Dorsolateral prefrontal cortex (tissue), 120 donors: ENCODE measurements at regions of chr9 and their contacts with region 1.

Region 1: DNA sequence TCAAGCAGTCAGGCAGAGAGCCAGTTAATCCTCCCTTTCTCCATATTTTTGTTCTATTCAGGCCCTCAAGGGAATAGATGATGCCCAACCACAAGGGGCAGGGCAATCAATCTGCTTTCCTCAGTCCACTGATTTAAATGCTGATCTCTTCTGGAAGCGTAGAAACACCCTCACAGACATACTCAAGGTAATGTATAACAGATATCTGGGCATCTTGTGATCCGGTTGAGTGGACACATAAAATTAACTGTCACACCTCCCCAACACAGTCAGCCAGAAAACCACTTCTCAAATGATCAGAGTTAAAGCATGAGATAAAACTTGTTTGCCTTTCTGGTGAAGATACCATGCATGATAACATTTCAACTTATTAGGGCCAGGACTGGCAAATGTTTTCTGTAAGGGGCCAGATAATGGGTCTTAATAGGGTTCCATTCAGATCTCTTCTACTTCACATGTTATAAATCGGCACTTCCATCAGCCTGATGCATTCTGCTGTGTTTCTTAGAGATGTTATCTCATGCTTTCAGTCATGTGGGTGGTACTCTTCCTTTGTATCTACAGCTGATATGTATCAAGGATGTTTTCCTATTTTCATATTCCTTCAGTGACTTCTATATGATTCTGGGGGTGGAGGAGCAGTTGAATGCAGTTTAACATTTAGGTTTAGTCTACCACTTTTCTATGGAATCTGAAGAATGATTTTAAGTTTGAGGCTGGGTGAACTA is 58.9 kb upstream of the CNTLN start:
- DNase-seq: no peak
- H3K4me3 ChIP-seq: no peak overlapping the region
- H3K27ac ChIP-seq: no peak overlapping the region
- H3K27me3 ChIP-seq: peaks cover 0 to 2% (median 0%) of the 10 kb centered on the region in 45 donors
- CTCF ChIP-seq: no peak

Region 2: DNA sequence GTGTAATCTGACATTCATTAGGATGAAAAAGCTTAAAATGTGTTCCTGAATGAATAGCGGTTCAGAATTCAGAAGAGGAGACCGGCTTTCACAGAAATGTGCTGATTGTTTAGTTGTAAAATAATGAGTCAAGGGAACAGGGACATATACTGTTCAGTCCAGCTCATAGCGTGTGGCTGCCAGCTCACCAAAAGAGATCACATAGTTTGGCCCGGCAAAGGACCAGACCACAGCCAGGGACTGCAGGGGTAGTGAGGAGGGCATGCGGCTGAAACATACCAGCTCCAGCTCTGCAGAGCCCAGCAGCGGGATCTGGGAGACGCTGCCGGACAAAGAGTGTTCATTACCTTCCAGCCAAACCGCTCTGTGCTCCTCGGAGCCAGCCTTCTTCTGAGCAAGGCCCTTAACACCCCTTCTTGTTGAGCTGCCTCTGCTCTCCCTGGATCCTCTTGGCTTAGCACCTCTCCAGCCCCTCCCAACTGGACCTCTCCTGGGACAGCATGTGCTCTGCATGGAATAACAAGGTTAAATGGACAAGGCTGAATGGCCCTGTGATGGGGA is 57.9 kb before region 1 on chr9:
- intact Hi-C with region 1: loop called in 1 of 2 experiments (anchors 10 kb)
- DNase-seq: peak in 4 of 10 donors; percentile 18 to 43 (median 36)
- H3K4me3 ChIP-seq: peak overlapping the region in 3 of 59 donors; percentile 10 to 12 (median 12)
- H3K27ac ChIP-seq: no peak overlapping the region
- H3K27me3 ChIP-seq: peaks cover 0 to 10% (median 0%) of the 10 kb centered on the region in 45 donors
- CTCF ChIP-seq: no peak

Region 3: GRCh38 chr9:17349831-17350230 is 273.9 kb after region 1 on chr9:
- intact Hi-C with region 1: no loop called
- DNase-seq: no peak
- H3K4me3 ChIP-seq: no peak overlapping the region
- H3K27ac ChIP-seq: no peak overlapping the region
- H3K27me3 ChIP-seq: no peaks in the 10 kb centered on the region
- CTCF ChIP-seq: no peak